ENCODE measurements at regions of chr13 and their contacts with region 1.

Region 1: DNA sequence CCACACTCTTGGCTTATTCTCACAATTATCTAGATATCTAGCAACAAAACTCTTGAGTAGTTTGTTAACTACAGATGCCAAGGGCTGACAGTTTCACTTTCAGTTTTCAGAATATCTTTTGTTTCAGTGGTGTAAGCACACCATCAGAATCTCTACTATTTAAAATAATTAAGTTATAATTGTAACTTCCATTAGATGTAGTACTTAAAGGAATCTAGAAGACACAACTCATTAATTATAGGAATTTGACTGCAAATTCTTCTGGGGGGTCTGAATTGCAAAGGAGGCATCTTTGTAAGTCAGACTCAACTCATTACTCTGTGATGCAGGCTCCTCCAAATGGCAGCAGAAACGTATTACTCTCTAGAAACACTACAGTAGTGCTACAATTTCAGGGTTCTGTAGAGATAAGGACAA is 44.9 kb upstream of the USPL1 start:
- DNase-seq: no peak
- H3K4me3 Mint-ChIP-seq: peak overlapping the region; percentile 62
- H3K27ac Mint-ChIP-seq: peak overlapping the region; percentile 18
- H3K4me1 Mint-ChIP-seq: peaks cover 54% of the 10 kb centered on the region
- H3K27me3 Mint-ChIP-seq: peaks cover 2% of the 10 kb centered on the region

Region 2: DNA sequence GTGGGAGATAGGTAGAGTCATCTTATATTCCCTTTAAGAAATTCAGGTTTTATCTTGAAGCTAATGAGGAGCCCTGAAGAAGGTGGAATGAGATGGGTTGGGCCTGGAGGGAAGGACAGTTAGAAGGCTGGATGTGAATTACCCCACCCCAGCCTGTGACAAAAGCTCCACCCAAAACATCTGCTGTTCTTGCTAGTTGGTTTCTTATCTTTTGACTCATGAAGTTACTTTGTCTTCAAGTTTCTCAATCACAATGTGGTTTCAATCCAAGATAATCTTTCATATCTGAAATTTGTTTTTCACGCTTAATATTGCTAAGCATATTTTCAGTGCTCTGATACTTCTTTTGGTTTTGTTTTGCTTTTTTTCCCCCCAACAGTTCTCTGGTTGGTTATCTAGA is 68.8 kb before region 1 on chr13:
- intact Hi-C with region 1: loop called (anchors 10 kb)
- DNase-seq: peak; percentile 44
- H3K4me3 Mint-ChIP-seq: no peak overlapping the region
- H3K27ac Mint-ChIP-seq: peak overlapping the region; percentile 39
- H3K4me1 Mint-ChIP-seq: peaks cover 17% of the 10 kb centered on the region
- H3K27me3 Mint-ChIP-seq: peaks cover 1% of the 10 kb centered on the region

Region 3: GRCh38 chr13:30607908-30608307 is 35.0 kb after region 1 on chr13:
- intact Hi-C with region 1: no loop called
- DNase-seq: peak; percentile 55
- H3K4me3 Mint-ChIP-seq: no peak overlapping the region
- H3K27ac Mint-ChIP-seq: no peak overlapping the region
- H3K4me1 Mint-ChIP-seq: peaks cover 11% of the 10 kb centered on the region
- H3K27me3 Mint-ChIP-seq: peaks cover 6% of the 10 kb centered on the region

Measured in activated T-helper 2 cell treated with anti-CD3 and anti-CD28 coated beads, Interferon-gamma antibody, Interleukin-2, Interleukin-4, amounts not matched to agents 10 μg/mL and 5 μg/mL and 100 μg/mL, durations not matched to agents 14 hours and 24 hours and 36 hours (primary cell).